ENCODE measurements at regions of chr1 and their contacts with region 1.

Region 1: DNA sequence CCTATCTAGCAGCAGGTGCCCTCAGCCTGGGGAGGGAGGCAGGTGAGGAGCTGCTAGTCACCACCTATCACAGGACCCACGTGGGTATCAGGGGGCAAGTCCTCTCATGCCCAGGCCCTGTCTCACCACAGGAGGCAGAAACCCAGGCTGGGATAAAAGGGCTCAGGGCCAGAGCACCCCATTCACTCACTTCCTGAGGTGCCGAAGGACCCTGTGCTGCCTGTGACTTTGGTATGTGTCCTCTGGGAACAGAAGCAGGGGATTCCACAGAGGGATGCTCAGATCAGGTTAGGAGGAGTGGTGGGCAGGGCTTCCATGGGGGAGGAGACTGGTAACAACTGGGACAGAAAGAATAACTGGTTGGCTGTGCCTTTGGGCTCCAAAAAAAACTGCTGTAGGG is at the start of gene LCE1E:
- DNase-seq: peak; percentile 82
- H3K4me3 Mint-ChIP-seq: no peak within 1 kb of the TSS
- H3K27ac Mint-ChIP-seq: peak within 1 kb of the TSS; percentile 21
- H3K4me1 Mint-ChIP-seq: peaks cover 10% of the 10 kb centered on the region
- H3K27me3 Mint-ChIP-seq: no peaks in the 10 kb centered on the region
- CTCF ChIP-seq: no peak
- total RNA-seq, gene LCE1E: 1.3 and 1.9 TPM in 2 replicates

Region 2: GRCh38 chr1:152801333-152801732 is 15.3 kb after region 1 on chr1:
- CTCF ChIA-PET with region 1: interaction called, 9 read pairs
- POLR2A ChIA-PET with region 1: interaction called, 18 read pairs
- intact Hi-C with region 1: no loop called
- DNase-seq: peak; percentile 3
- H3K4me3 Mint-ChIP-seq: no peak overlapping the region
- H3K27ac Mint-ChIP-seq: no peak overlapping the region
- H3K4me1 Mint-ChIP-seq: peaks cover 8% of the 10 kb centered on the region
- H3K27me3 Mint-ChIP-seq: no peaks in the 10 kb centered on the region
- CTCF ChIP-seq: no peak

Region 3: GRCh38 chr1:152858062-152858461 is 72.0 kb after region 1 on chr1:
- CTCF ChIA-PET with region 1: no interaction called
- POLR2A ChIA-PET with region 1: no interaction called
- intact Hi-C with region 1: no loop called
- DNase-seq: no peak
- H3K4me3 Mint-ChIP-seq: no peak overlapping the region
- H3K27ac Mint-ChIP-seq: no peak overlapping the region
- H3K4me1 Mint-ChIP-seq: no peaks in the 10 kb centered on the region
- H3K27me3 Mint-ChIP-seq: no peaks in the 10 kb centered on the region
- CTCF ChIP-seq: no peak